K562 (cell line): ENCODE measurements at regions of chr7 and their contacts with region 1.

Region 1: GRCh38 chr7:17769918-17770317 is 170.4 kb downstream of the SNX13 start:
- DNase-seq: peak; percentile 40 to 72 (median 50)
- ATAC-seq: peak; percentile 94
- H3K4me3 ChIP-seq: no peak overlapping the region
- H3K27ac ChIP-seq: no peak overlapping the region
- H3K4me1 ChIP-seq: no peaks in the 10 kb centered on the region
- H3K27me3 ChIP-seq: no peaks in the 10 kb centered on the region
- CTCF ChIP-seq: peak; percentile 65 to 82 (median 74)
- EP300 ChIP-seq: no peak
- POLR2A ChIP-seq: no peak
- RAD21 ChIP-seq: peak; percentile 81 to 90

Region 2: GRCh38 chr7:17706734-17707133 is 63.2 kb before region 1 on chr7:
- CTCF ChIA-PET with region 1: no interaction called
- POLR2A ChIA-PET with region 1: no interaction called
- in situ Hi-C with region 1: no loop called
- intact Hi-C with region 1: loop called (anchors 2 kb)
- DNase-seq: peak; percentile 31 to 70 (median 45)
- ATAC-seq: peak; percentile 91
- H3K4me3 ChIP-seq: no peak overlapping the region
- H3K27ac ChIP-seq: no peak overlapping the region
- H3K4me1 ChIP-seq: no peaks in the 10 kb centered on the region
- H3K27me3 ChIP-seq: no peaks in the 10 kb centered on the region
- CTCF ChIP-seq: peak; percentile 60 to 74 (median 62)
- EP300 ChIP-seq: no peak
- POLR2A ChIP-seq: no peak
- RAD21 ChIP-seq: peak; percentile 73 to 85

Region 3: DNA sequence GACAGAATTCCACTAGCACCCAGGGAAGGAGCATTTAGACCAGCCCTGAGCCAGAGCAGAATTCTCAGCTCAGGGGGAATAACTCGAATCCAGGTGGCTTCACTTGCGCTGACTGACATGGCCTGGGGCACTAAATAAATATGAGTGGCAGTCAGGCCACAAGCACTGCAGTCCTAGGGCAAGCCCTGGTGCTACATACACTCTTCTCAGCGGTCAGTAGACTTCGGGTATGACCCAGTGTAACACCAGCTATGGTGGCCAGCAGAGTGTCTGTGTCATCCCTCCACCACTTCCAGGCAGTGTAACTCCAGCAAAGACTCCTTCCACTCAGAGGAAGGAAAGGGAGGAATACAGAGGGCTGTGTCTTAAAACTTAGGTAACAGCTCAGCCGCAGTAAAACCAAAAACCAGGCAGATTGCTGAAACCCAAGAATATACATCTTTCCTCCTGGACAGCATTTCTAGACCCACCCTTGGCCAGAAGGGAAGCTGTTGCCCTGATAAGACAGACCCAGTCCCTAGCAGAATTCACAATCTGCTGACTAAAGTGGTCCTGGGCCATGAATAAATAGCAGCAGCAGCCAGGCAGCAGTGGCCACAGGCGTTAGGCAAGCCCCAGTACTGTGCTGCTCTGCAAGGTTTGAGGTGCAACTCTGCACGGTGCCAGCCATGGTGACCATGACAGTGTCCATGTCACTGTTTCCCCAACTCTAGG is 93.3 kb after region 1 on chr7:
- CTCF ChIA-PET with region 1: no interaction called
- POLR2A ChIA-PET with region 1: no interaction called
- in situ Hi-C with region 1: no loop called
- intact Hi-C with region 1: loop called (anchors 5 kb)
- DNase-seq: peak in 2 of 4 experiments; percentile 5 to 34
- ATAC-seq: peak; percentile 79
- H3K4me3 ChIP-seq: no peak overlapping the region
- H3K27ac ChIP-seq: no peak overlapping the region; the same call in 2 of the 3 replicates
- H3K4me1 ChIP-seq: peaks cover 3 to 4% of the 10 kb centered on the region in 2 experiments; a peak in 3 of 5 replicates
- H3K27me3 ChIP-seq: no peaks in the 10 kb centered on the region
- CTCF ChIP-seq: no peak
- EP300 ChIP-seq: no peak
- POLR2A ChIP-seq: no peak
- RAD21 ChIP-seq: no peak

Region 4: DNA sequence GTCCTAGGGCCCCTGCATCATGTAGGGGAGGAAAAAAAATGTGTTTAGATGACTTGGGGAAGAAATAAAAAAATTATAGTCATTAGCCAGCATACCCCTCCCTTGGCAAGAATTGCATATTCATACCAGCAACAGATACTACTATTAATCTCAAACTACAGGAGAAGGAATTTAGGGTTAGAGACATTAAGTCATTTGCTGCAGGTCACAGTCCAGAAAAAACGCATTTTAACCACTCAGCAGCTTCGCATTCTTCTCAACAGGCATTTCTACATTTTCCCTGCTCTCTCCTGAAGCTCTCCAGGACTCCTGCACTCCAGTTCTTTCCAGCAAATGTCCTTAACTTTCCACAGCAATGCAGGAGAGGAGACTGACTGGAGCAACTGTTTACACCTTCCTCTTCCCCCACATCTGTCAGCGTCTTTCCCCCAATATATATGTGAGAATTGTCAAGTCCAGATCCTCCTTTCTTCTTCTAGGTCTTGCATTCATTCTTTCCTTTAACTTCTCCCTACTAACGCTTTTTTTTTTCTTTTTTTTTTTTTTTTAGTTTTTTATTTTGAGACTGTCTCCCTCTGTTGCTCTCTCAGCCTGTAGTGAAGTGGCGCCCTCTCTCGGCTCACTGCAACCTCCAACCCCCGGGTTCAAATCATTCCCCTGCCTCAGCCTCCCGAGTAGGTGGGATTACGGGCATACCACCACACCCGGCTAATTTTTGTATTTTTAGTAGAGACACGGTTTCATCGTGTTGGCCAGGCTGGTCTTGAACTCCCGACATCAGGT is 222.1 kb after region 1 on chr7:
- CTCF ChIA-PET with region 1: no interaction called
- POLR2A ChIA-PET with region 1: no interaction called
- in situ Hi-C with region 1: no loop called
- intact Hi-C with region 1: loop called (anchors 1 kb)
- DNase-seq: peak in 1 of 4 experiments; percentile 45
- ATAC-seq: peak; percentile 88
- H3K4me3 ChIP-seq: no peak overlapping the region
- H3K27ac ChIP-seq: no peak overlapping the region
- H3K4me1 ChIP-seq: 0 out of 5 replicates have a peak, but pooled peaks cover 0 to 4% of the 10 kb centered on the region in 2 experiments
- H3K27me3 ChIP-seq: no peaks in the 10 kb centered on the region
- CTCF ChIP-seq: peak; percentile 47 to 60 (median 56)
- EP300 ChIP-seq: no peak
- POLR2A ChIP-seq: no peak
- RAD21 ChIP-seq: peak; percentile 18 to 42; a peak in 3 of 4 replicates

Region 5: DNA sequence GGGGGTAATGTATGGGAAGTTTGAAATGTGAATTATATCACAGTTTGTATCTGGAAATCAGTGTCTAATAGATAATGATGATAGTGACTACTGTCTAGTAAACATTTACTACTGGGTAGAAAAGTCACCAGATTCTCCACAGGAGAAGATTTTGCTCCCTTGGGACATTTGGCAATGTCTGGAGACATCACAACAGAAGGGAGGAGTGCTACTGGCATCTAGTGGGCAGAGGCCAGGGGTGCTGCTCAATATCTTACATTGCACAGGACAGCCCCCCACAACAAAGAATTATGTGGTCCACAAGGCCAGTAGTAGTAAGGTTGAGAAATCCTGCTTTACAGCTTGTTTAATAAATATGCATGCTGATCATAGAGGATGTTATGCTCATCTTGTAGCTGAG is 350.1 kb after region 1 on chr7:
- CTCF ChIA-PET with region 1: interaction called, 3 read pairs
- POLR2A ChIA-PET with region 1: no interaction called
- in situ Hi-C with region 1: no loop called
- intact Hi-C with region 1: loop called (anchors 2 kb)
- DNase-seq: no peak
- ATAC-seq: peak; percentile 48
- H3K4me3 ChIP-seq: no peak overlapping the region
- H3K27ac ChIP-seq: no peak overlapping the region
- H3K4me1 ChIP-seq: no peaks in the 10 kb centered on the region; a peak in 1 of 5 replicates
- H3K27me3 ChIP-seq: no peaks in the 10 kb centered on the region
- CTCF ChIP-seq: peak in 2 of 3 experiments; percentile 19 to 28; a peak in 2 of 6 replicates
- EP300 ChIP-seq: no peak
- POLR2A ChIP-seq: no peak
- RAD21 ChIP-seq: peak in 1 of 2 experiments; percentile 22; a peak in 2 of 4 replicates

Region 6: GRCh38 chr7:18306704-18307103 is 536.8 kb after region 1 on chr7:
- CTCF ChIA-PET with region 1: no interaction called
- POLR2A ChIA-PET with region 1: no interaction called
- in situ Hi-C with region 1: no loop called
- intact Hi-C with region 1: no loop called
- DNase-seq: no peak
- ATAC-seq: no peak
- H3K4me3 ChIP-seq: no peak overlapping the region
- H3K27ac ChIP-seq: no peak overlapping the region
- H3K4me1 ChIP-seq: peaks cover 0 to 2% of the 10 kb centered on the region in 2 experiments; a peak in 1 of 5 replicates
- H3K27me3 ChIP-seq: no peaks in the 10 kb centered on the region
- CTCF ChIP-seq: no peak
- EP300 ChIP-seq: no peak
- POLR2A ChIP-seq: no peak
- RAD21 ChIP-seq: no peak

Region 7: GRCh38 chr7:18320971-18321567 is 551.2 kb after region 1 on chr7:
- CTCF ChIA-PET with region 1: no interaction called
- POLR2A ChIA-PET with region 1: interaction called, 4 read pairs
- in situ Hi-C with region 1: loop called (anchors 10 kb)
- intact Hi-C with region 1: no loop called
- DNase-seq: peak; percentile 22 to 53 (median 32)
- ATAC-seq: peak; percentile 89
- H3K4me3 ChIP-seq: no peak overlapping the region
- H3K27ac ChIP-seq: no peak overlapping the region
- H3K4me1 ChIP-seq: peaks cover 0 to 8% of the 10 kb centered on the region in 2 experiments; a peak in 1 of 5 replicates
- H3K27me3 ChIP-seq: no peaks in the 10 kb centered on the region
- CTCF ChIP-seq: peak; percentile 20 to 61 (median 45); a peak in 4 of 6 replicates
- EP300 ChIP-seq: no peak
- POLR2A ChIP-seq: no peak
- RAD21 ChIP-seq: peak; percentile 45 to 69

Region 8: DNA sequence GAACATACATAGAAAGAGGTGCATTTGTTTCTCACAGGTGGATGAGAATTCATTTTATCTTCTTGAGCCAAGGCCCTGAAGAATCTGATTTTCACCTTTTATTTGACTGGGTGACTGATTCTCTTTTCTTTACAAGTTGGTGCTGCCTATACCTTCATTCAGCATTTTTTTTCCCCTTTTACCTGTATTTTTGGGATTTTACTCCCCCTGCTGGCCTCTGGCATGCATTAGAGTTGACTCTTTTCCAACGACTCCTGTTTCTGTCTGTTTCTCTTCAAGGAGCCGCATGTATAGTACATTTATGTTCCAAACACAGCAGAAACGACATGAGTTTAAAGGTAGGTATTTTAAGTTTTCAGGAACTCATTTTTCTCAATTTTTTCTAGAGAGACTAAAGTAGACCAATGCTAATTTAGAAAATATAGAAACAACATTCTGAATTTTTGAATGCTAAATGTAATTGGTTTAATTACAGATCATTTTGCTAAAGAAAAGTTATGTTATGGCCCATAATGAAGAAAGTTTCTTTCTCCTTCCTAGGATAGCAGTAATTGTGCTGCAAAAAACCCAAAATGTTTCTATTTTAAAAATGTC is 575.8 kb after region 1 on chr7:
- CTCF ChIA-PET with region 1: interaction called, 8 read pairs
- POLR2A ChIA-PET with region 1: no interaction called
- in situ Hi-C with region 1: no loop called
- intact Hi-C with region 1: loop called (anchors 1 kb)
- DNase-seq: peak; percentile 19 to 61 (median 27)
- ATAC-seq: peak; percentile 81
- H3K4me3 ChIP-seq: no peak overlapping the region
- H3K27ac ChIP-seq: no peak overlapping the region
- H3K4me1 ChIP-seq: no peaks in the 10 kb centered on the region
- H3K27me3 ChIP-seq: no peaks in the 10 kb centered on the region
- CTCF ChIP-seq: peak; percentile 69 to 82 (median 73)
- EP300 ChIP-seq: no peak
- POLR2A ChIP-seq: no peak
- RAD21 ChIP-seq: peak; percentile 88 to 90